K562 (cell line): ENCODE measurements at regions of chr11 and their contacts with region 1.

Region 1: GRCh38 chr11:20609727-20610707 is 10.6 kb downstream of the SLC6A5 start:
- DNase-seq: peak; percentile 82 to 87 (median 84)
- ATAC-seq: peak; percentile 98
- H3K4me3 ChIP-seq: no peak overlapping the region
- H3K27ac ChIP-seq: no peak overlapping the region
- H3K4me1 ChIP-seq: peaks cover 0 to 8% of the 10 kb centered on the region in 2 experiments; a peak in 2 of 5 replicates
- H3K27me3 ChIP-seq: peaks cover 9 to 21% of the 10 kb centered on the region in 2 experiments; a peak in 4 of 5 replicates
- CTCF ChIP-seq: peak; percentile 93 to 97 (median 94)
- EP300 ChIP-seq: no peak
- POLR2A ChIP-seq: no peak
- RAD21 ChIP-seq: peak; percentile 92 to 93

Region 2: DNA sequence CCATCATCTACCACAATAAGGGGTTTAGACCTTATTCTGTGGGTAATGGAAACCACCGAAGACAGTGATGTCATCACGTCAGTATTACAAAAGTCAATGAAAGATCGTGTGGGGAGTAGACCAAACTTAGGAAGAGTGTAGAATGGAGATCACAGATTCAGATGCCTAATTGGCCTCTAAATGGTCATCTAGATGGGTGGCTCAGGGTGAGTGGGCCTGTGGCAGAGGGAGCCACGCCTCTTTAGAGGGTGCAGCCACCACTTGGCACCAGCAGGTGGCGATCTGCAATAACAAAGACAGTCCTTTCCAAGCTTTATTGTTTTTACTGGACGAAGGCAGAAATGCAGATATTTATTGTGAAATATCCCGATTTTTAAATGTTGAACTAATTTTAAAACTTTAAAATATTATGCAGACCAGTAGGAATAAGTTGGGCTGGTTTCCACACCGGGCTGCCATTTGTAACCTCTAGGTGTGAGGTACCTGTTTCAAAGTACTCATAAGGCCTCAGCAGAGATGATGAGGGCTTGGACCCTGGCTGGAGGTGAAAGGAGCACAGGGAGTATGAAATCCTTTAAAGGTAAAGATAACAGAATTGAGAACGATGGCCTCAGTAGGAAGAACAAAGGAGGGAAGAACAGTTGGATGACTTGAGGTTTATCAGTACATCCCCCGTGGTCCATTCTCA is 671.7 kb before region 1 on chr11:
- CTCF ChIA-PET with region 1: interaction called, 3 read pairs
- POLR2A ChIA-PET with region 1: no interaction called
- in situ Hi-C with region 1: loop called (anchors 25 kb)
- intact Hi-C with region 1: no loop called
- DNase-seq: peak; percentile 70 to 84 (median 79)
- ATAC-seq: peak; percentile 92
- H3K4me3 ChIP-seq: no peak overlapping the region
- H3K27ac ChIP-seq: no peak overlapping the region
- H3K4me1 ChIP-seq: no peaks in the 10 kb centered on the region; a peak in 1 of 5 replicates
- H3K27me3 ChIP-seq: peaks cover 8 to 42% of the 10 kb centered on the region in 2 experiments
- CTCF ChIP-seq: peak; percentile 86 to 89 (median 88)
- EP300 ChIP-seq: no peak
- POLR2A ChIP-seq: no peak
- RAD21 ChIP-seq: peak; percentile 75 to 84

Region 3: DNA sequence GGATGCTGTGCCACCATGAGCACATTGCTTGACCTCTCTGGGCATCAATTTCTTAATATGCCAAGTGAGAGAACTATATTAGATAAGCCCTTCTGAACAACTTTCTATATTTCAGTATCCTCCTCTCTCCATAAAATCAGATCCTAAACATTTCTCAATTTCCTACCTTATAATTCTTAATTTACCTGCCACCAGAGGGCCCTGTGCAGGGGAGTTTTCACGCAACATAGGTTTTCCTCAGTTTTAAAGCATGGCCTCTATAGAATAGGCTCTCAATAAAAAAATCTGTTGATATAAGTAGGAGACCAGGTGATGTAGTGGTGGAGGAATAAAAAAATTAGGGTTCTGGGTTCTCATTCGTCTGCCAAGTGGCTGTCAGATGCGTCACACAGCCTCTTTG is 366.0 kb before region 1 on chr11:
- CTCF ChIA-PET with region 1: no interaction called
- POLR2A ChIA-PET with region 1: no interaction called
- in situ Hi-C with region 1: no loop called
- intact Hi-C with region 1: loop called (anchors 5 kb)
- DNase-seq: peak in 1 of 4 experiments; percentile 11
- ATAC-seq: peak; percentile 62
- H3K4me3 ChIP-seq: no peak overlapping the region
- H3K27ac ChIP-seq: no peak overlapping the region
- H3K4me1 ChIP-seq: no peaks in the 10 kb centered on the region
- H3K27me3 ChIP-seq: peaks cover 4 to 17% of the 10 kb centered on the region in 2 experiments; a peak in 3 of 5 replicates
- CTCF ChIP-seq: peak; percentile 30 to 52 (median 48); a peak in 5 of 6 replicates
- EP300 ChIP-seq: no peak
- POLR2A ChIP-seq: no peak
- RAD21 ChIP-seq: peak in 1 of 2 experiments; percentile 24; a peak in 1 of 4 replicates

Region 4: GRCh38 chr11:20387241-20388095 is 222.5 kb before region 1 on chr11 and contains the start of gene PRMT3:
- CTCF ChIA-PET with region 1: interaction called, 5 read pairs
- POLR2A ChIA-PET with region 1: interaction called, 4 read pairs
- in situ Hi-C with region 1: loop called (anchors 10 kb)
- intact Hi-C with region 1: loop called (anchors 5 kb)
- DNase-seq: peak; percentile 93 to 96 (median 94)
- ATAC-seq: peak; percentile 89
- H3K4me3 ChIP-seq: peak within 1 kb of the TSS; percentile 91
- H3K27ac ChIP-seq: peak within 1 kb of the TSS; percentile 96
- H3K4me1 ChIP-seq: peaks cover 0 to 10% of the 10 kb centered on the region in 2 experiments; a peak in 2 of 5 replicates
- H3K27me3 ChIP-seq: no peaks in the 10 kb centered on the region
- CTCF ChIP-seq: peak; percentile 83 to 97 (median 85)
- EP300 ChIP-seq: peak; percentile 16; the same call in 1 of the 2 replicates
- POLR2A ChIP-seq: peak; percentile 87
- RAD21 ChIP-seq: peak; percentile 72 to 77
- polyA plus RNA-seq, gene PRMT3: 24.0 to 35.3 TPM

Region 5: DNA sequence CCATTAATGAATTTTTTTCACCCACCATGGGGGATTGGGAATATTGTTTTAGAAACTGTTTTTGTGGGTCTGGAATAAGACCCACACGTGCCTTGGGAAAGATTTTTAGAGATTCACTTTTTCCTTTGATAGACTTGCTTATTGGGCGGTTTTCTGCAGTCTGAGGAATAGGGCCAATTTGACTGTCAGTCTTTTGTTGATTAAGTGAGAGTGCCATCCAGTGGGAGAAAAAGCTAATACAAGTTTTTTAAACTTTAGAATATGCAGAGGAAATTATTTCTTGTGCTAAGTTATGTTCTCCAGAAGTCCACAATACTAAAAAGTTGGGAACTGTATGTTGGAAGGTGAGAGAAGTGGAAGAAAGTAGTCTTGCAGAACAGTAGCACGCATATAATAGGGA is 166.4 kb before region 1 on chr11:
- CTCF ChIA-PET with region 1: no interaction called
- POLR2A ChIA-PET with region 1: no interaction called
- in situ Hi-C with region 1: no loop called
- intact Hi-C with region 1: loop called (anchors 5 kb)
- DNase-seq: peak in 2 of 4 experiments; percentile 24 to 43
- ATAC-seq: peak; percentile 86
- H3K4me3 ChIP-seq: no peak overlapping the region
- H3K27ac ChIP-seq: no peak overlapping the region
- H3K4me1 ChIP-seq: no peaks in the 10 kb centered on the region
- H3K27me3 ChIP-seq: no peaks in the 10 kb centered on the region
- CTCF ChIP-seq: peak; percentile 23 to 57 (median 42); a peak in 5 of 6 replicates
- EP300 ChIP-seq: no peak
- POLR2A ChIP-seq: no peak
- RAD21 ChIP-seq: peak; percentile 31 to 48